ENCODE measurements at regions of chr5 and their contacts with region 1.

Region 1: DNA sequence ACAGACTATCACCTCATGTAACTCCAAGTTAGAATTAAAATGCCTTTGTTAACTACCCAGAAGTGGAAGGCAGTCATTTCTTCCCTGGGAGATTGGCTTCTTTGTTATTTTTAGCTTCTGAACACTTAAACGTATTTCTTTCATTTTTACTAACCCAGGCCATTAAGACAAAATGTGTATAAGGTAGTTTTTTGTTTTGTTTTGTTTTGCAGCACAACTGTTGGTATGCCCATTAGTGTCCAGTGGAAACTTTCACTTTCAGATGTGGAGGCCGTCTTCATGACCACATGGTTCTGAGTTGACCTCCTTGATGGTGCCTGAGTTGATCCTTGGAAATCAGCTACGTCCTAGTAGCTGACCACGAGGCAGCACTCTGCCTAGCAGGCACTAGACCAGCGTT is 264.6 kb upstream of the ZNF608 start:
- DNase-seq: no peak
- H3K4me3 Mint-ChIP-seq: no peak overlapping the region
- H3K27ac Mint-ChIP-seq: no peak overlapping the region
- H3K4me1 Mint-ChIP-seq: peaks cover 27% of the 10 kb centered on the region
- H3K27me3 Mint-ChIP-seq: no peaks in the 10 kb centered on the region
- CTCF ChIP-seq: no peak

Region 2: GRCh38 chr5:124806373-124807077 is 204.5 kb before region 1 on chr5:
- CTCF ChIA-PET with region 1: no interaction called
- intact Hi-C with region 1: no loop called
- DNase-seq: peak; percentile 84
- H3K4me3 Mint-ChIP-seq: no peak overlapping the region
- H3K27ac Mint-ChIP-seq: no peak overlapping the region
- H3K4me1 Mint-ChIP-seq: no peaks in the 10 kb centered on the region
- H3K27me3 Mint-ChIP-seq: no peaks in the 10 kb centered on the region
- CTCF ChIP-seq: no peak

Region 3: GRCh38 chr5:125160787-125161502 is 149.9 kb after region 1 on chr5:
- CTCF ChIA-PET with region 1: no interaction called
- intact Hi-C with region 1: no loop called
- DNase-seq: no peak
- H3K4me3 Mint-ChIP-seq: no peak overlapping the region
- H3K27ac Mint-ChIP-seq: no peak overlapping the region
- H3K4me1 Mint-ChIP-seq: no peaks in the 10 kb centered on the region
- H3K27me3 Mint-ChIP-seq: no peaks in the 10 kb centered on the region
- CTCF ChIP-seq: no peak

Region 4: GRCh38 chr5:125269926-125270325 is 258.9 kb after region 1 on chr5:
- CTCF ChIA-PET with region 1: interaction called, 10 read pairs
- intact Hi-C with region 1: no loop called
- DNase-seq: no peak
- H3K4me3 Mint-ChIP-seq: no peak overlapping the region
- H3K27ac Mint-ChIP-seq: no peak overlapping the region
- H3K4me1 Mint-ChIP-seq: peaks cover 11% of the 10 kb centered on the region
- H3K27me3 Mint-ChIP-seq: no peaks in the 10 kb centered on the region
- CTCF ChIP-seq: no peak